ENCODE measurements at regions of chr1 and their contacts with region 1.

Region 1: DNA sequence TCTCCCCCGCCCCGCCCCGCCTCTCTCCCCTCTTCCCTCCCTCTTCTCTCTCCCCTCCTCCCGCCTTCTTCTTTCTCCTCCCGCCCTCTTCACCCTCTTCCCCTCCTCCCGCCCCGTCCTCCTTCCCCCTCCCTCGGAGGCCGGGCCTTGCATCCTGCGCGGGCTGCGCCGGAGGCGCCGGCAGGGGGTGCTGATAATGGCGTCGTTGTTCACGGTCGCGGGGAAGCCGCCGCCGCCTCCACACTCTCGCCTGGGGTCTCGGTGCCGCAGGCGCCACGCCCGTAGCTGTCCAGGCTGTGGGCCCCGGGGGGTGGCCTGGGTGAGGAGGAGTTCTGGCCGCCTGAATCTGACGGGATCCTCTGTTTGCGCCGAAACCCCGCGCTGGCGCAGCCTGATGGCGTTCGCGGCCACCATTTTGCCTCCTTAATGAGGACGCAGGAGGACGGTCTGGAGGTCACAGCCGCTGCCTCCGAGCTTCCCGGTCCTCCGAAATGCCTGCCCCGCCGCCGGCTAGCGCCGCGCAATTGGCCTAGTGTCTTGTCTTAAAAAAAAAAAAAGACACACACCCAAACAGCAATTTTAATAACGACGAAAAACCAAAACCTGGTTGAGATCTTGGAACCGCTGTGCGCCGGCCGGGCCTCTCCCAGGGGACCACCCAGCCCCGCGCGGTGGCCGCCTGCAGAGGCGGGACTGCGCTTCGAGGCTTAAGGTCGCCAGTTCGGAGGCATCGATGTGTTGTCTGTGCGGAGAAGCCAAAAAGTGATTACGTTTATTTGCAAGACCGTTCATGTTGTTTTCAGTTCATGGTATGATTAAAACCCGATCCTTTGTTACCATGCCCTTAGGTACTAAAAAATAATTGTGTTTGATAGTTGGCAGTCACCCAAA is 106.6 kb upstream of the HNRNPU start:
- DNase-seq: peak; percentile 91 to 97 (median 95)
- ATAC-seq: peak; percentile 88
- H3K4me3 ChIP-seq: peak overlapping the region; percentile 81
- H3K4me3 Mint-ChIP-seq: peak overlapping the region; percentile 91 to 95 (median 93)
- H3K27ac ChIP-seq: peak overlapping the region; percentile 99
- H3K27ac Mint-ChIP-seq: peak overlapping the region; percentile 97 to 100 (median 99)
- H3K4me1 ChIP-seq: peaks cover 5 to 12% of the 10 kb centered on the region in 2 donors
- H3K4me1 Mint-ChIP-seq: peaks cover 7 to 31% (median 25%) of the 10 kb centered on the region in 7 donors
- H3K27me3 ChIP-seq: no peaks in the 10 kb centered on the region
- H3K27me3 Mint-ChIP-seq: peaks cover 0 to 14% (median 0%) of the 10 kb centered on the region in 5 donors

Region 2: GRCh38 chr1:244599937-244600350 is 371.0 kb before region 1 on chr1:
- CTCF ChIA-PET with region 1: interaction called, 3 read pairs
- POLR2A ChIA-PET with region 1: interaction called, 4 read pairs
- intact Hi-C with region 1: loop called (anchors 1 to 5 kb)
- DNase-seq: peak in 5 of 9 donors; percentile 7 to 47 (median 14)
- ATAC-seq: peak; percentile 86
- H3K4me3 ChIP-seq: no peak overlapping the region
- H3K4me3 Mint-ChIP-seq: peak overlapping the region in 3 of 10 donors; percentile 30 to 67 (median 64)
- H3K27ac ChIP-seq: no peak overlapping the region
- H3K27ac Mint-ChIP-seq: peak overlapping the region in 5 of 9 donors; percentile 57 to 90 (median 89)
- H3K4me1 ChIP-seq: no peaks in the 10 kb centered on the region
- H3K4me1 Mint-ChIP-seq: peaks cover 0 to 16% (median 0%) of the 10 kb centered on the region in 7 donors
- H3K27me3 ChIP-seq: no peaks in the 10 kb centered on the region
- H3K27me3 Mint-ChIP-seq: peaks cover 0 to 7% (median 0%) of the 10 kb centered on the region in 5 donors

Region 3: GRCh38 chr1:244864253-244865027 is 106.5 kb before region 1 on chr1 and contains the start of gene HNRNPU:
- CTCF ChIA-PET with region 1: interaction called, 17 read pairs
- POLR2A ChIA-PET with region 1: interaction called, 308 read pairs
- intact Hi-C with region 1: loop called (anchors 1 kb)
- DNase-seq: peak; percentile 93 to 99 (median 98)
- ATAC-seq: peak; percentile 81
- H3K4me3 ChIP-seq: peak within 1 kb of the TSS; percentile 78
- H3K4me3 Mint-ChIP-seq: peak within 1 kb of the TSS; percentile 86 to 98 (median 98)
- H3K27ac ChIP-seq: peak within 1 kb of the TSS; percentile 100
- H3K27ac Mint-ChIP-seq: peak within 1 kb of the TSS; percentile 93 to 100 (median 98)
- H3K4me1 ChIP-seq: peaks cover 23 to 25% of the 10 kb centered on the region in 2 donors
- H3K4me1 Mint-ChIP-seq: peaks cover 39 to 56% (median 51%) of the 10 kb centered on the region in 7 donors
- H3K27me3 ChIP-seq: no peaks in the 10 kb centered on the region
- H3K27me3 Mint-ChIP-seq: peaks cover 0 to 3% (median 0%) of the 10 kb centered on the region in 5 donors
- total RNA-seq, gene HNRNPU: 378 to 509 (median 428) TPM

Region 4: GRCh38 chr1:245045087-245045881 is 74.4 kb after region 1 on chr1:
- CTCF ChIA-PET with region 1: interaction called, 3 read pairs
- POLR2A ChIA-PET with region 1: interaction called, 7 read pairs
- intact Hi-C with region 1: loop called (anchors 1 kb)
- DNase-seq: no peak
- ATAC-seq: no peak
- H3K4me3 ChIP-seq: no peak overlapping the region
- H3K4me3 Mint-ChIP-seq: no peak overlapping the region
- H3K27ac ChIP-seq: no peak overlapping the region
- H3K27ac Mint-ChIP-seq: no peak overlapping the region
- H3K4me1 ChIP-seq: no peaks in the 10 kb centered on the region
- H3K4me1 Mint-ChIP-seq: peaks cover 0 to 6% (median 0%) of the 10 kb centered on the region in 7 donors
- H3K27me3 ChIP-seq: no peaks in the 10 kb centered on the region
- H3K27me3 Mint-ChIP-seq: peaks cover 0 to 2% (median 0%) of the 10 kb centered on the region in 5 donors

Region 5: GRCh38 chr1:246506674-246507481 is 1536.0 kb after region 1 on chr1 and contains the start of gene SMYD3:
- CTCF ChIA-PET with region 1: no interaction called
- POLR2A ChIA-PET with region 1: no interaction called
- intact Hi-C with region 1: loop called in 1 of 2 experiments (anchors 2 kb)
- DNase-seq: peak; percentile 70 to 81 (median 75)
- ATAC-seq: peak; percentile 93
- H3K4me3 ChIP-seq: peak within 1 kb of the TSS; percentile 78
- H3K4me3 Mint-ChIP-seq: peak within 1 kb of the TSS; percentile 88 to 96 (median 93)
- H3K27ac ChIP-seq: peak within 1 kb of the TSS; percentile 75
- H3K27ac Mint-ChIP-seq: peak within 1 kb of the TSS; percentile 78 to 95 (median 91)
- H3K4me1 ChIP-seq: peaks cover 4 to 6% of the 10 kb centered on the region in 2 donors
- H3K4me1 Mint-ChIP-seq: peaks cover 19 to 41% (median 30%) of the 10 kb centered on the region in 7 donors
- H3K27me3 ChIP-seq: no peaks in the 10 kb centered on the region
- H3K27me3 Mint-ChIP-seq: no peaks in the 10 kb centered on the region
- total RNA-seq, gene SMYD3: 19.5 to 28.6 (median 24.2) TPM

Measured in naive thymus-derived CD4-positive, alpha-beta T cell (primary cell).